Activated naive CD4-positive, alpha-beta T cell treated with anti-CD3 and anti-CD28 coated beads for 36 hours (primary cell): ENCODE measurements at regions of chr17 and their contacts with region 1.

Region 1: DNA sequence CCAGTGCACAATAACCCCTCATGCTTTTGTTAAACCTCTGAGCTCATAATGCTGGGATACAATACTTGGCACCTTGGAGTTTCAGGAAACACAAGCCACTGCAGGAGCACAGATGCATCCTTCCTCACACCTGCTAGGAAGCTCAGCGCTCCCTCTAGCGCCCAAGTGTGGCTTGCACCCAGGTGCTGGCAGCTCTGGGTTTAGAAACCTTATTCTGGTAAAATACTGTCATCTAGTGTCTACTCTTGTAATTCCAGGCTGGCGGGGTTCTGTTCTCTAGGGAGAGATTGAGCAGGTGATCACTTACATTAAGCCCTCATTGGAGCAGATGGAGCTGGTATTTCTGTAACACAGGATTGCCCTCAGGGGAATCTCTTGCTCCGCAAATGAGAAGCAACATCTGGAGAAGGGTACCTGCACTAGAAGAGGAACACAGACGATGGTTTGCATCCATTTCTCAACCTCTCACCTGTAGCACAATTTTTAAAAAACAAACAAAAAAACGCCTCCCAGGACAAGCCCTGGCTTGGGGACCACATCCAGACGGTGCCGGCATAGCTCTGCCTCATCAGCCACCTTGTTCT is 1.5 kb downstream of the CCL1 start:
- DNase-seq: peak; percentile 89
- H3K4me3 Mint-ChIP-seq: no peak overlapping the region
- H3K27ac Mint-ChIP-seq: no peak overlapping the region
- H3K4me1 Mint-ChIP-seq: peaks cover 8% of the 10 kb centered on the region
- H3K27me3 Mint-ChIP-seq: peaks cover 4% of the 10 kb centered on the region

Region 2: DNA sequence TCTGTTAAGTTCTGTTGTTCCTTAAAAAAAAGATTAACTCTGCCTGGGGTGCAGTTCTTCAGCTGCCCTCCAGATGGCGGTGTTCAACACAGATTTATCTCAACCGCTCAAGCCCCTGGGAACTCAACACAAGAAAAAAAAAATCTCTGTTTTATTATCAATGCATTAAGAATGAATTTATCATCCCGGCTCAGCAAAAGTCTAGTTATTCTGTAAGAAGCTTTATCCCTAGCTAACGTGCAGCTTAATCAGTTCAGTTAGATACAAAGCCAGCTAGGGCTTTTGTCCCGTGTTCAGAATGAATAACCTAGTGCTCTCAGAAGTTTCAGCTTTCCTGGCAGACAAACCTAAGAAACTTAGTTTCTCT is 582.4 kb before region 1 on chr17:
- CTCF ChIA-PET with region 1: no interaction called
- intact Hi-C with region 1: loop called (anchors 10 kb)
- DNase-seq: peak; percentile 57
- H3K4me3 Mint-ChIP-seq: no peak overlapping the region
- H3K27ac Mint-ChIP-seq: no peak overlapping the region
- H3K4me1 Mint-ChIP-seq: no peaks in the 10 kb centered on the region
- H3K27me3 Mint-ChIP-seq: peaks cover 20% of the 10 kb centered on the region

Region 3: GRCh38 chr17:34171245-34171818 is 190.2 kb before region 1 on chr17:
- CTCF ChIA-PET with region 1: interaction called, 31 read pairs
- intact Hi-C with region 1: loop called (anchors 1 kb)
- DNase-seq: peak; percentile 68
- H3K4me3 Mint-ChIP-seq: no peak overlapping the region
- H3K27ac Mint-ChIP-seq: no peak overlapping the region
- H3K4me1 Mint-ChIP-seq: no peaks in the 10 kb centered on the region
- H3K27me3 Mint-ChIP-seq: peaks cover 9% of the 10 kb centered on the region

Region 4: GRCh38 chr17:34199932-34200534 is 161.5 kb before region 1 on chr17:
- CTCF ChIA-PET with region 1: interaction called, 241 read pairs
- intact Hi-C with region 1: loop called (anchors 1 kb)
- DNase-seq: peak; percentile 82
- H3K4me3 Mint-ChIP-seq: no peak overlapping the region
- H3K27ac Mint-ChIP-seq: no peak overlapping the region
- H3K4me1 Mint-ChIP-seq: peaks cover 12% of the 10 kb centered on the region
- H3K27me3 Mint-ChIP-seq: peaks cover 33% of the 10 kb centered on the region

Region 5: GRCh38 chr17:34220754-34221395 is 140.7 kb before region 1 on chr17:
- CTCF ChIA-PET with region 1: interaction called, 10 read pairs
- intact Hi-C with region 1: no loop called
- DNase-seq: no peak
- H3K4me3 Mint-ChIP-seq: no peak overlapping the region
- H3K27ac Mint-ChIP-seq: no peak overlapping the region
- H3K4me1 Mint-ChIP-seq: no peaks in the 10 kb centered on the region
- H3K27me3 Mint-ChIP-seq: peaks cover 36% of the 10 kb centered on the region

Region 6: DNA sequence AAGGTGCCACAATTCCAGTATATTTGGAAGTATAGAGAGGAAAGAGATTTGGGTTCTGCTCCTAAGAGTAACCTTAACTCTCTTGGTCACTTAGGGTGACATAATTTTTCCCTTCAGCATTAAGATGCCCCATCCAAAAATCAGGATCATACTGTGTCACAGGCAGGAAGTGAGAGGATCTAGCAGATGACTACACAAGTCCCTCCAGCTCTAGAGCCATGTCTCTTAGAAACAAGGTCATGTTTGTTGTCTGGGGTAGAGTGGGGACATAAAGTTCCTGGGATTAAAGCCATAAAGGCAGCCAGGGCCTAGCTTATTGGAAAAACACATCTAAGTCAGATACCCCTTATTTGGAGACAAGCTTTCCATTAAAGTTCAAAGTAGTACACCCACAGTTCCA is 39.6 kb before region 1 on chr17:
- CTCF ChIA-PET with region 1: interaction called, 11 read pairs
- intact Hi-C with region 1: no loop called
- DNase-seq: no peak
- H3K4me3 Mint-ChIP-seq: no peak overlapping the region
- H3K27ac Mint-ChIP-seq: no peak overlapping the region
- H3K4me1 Mint-ChIP-seq: no peaks in the 10 kb centered on the region
- H3K27me3 Mint-ChIP-seq: peaks cover 11% of the 10 kb centered on the region

Region 7: DNA sequence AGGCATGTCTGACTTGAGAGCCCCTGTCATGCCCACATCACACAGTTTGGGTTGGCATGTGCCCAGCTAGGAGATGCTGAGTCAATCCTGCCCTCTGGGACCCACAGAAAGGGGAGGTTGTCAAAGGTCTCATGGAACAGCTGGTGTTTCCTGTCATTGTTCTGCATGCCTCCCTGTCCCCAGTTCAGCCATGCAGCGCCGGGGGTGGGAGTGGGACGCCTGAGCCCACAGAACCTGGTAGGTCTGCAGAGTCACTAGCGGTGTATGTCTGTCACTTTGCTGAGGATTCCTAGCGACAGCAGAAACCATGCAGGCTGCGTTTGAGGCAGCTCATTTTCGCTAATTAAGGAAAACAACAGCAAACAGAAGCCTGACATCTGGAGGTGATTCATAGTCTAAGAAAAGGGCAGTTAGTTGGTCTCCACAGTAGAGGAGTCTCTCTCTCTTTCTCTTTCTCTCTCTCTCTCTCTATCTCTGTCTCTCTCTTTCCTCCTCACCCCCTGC is 21.1 kb after region 1 on chr17:
- CTCF ChIA-PET with region 1: interaction called, 11 read pairs
- intact Hi-C with region 1: no loop called
- DNase-seq: peak; percentile 64
- H3K4me3 Mint-ChIP-seq: no peak overlapping the region
- H3K27ac Mint-ChIP-seq: no peak overlapping the region
- H3K4me1 Mint-ChIP-seq: peaks cover 21% of the 10 kb centered on the region
- H3K27me3 Mint-ChIP-seq: peaks cover 10% of the 10 kb centered on the region